T-cell (primary cell): ENCODE measurements at regions of chr2 and their contacts with region 1.

Region 1: DNA sequence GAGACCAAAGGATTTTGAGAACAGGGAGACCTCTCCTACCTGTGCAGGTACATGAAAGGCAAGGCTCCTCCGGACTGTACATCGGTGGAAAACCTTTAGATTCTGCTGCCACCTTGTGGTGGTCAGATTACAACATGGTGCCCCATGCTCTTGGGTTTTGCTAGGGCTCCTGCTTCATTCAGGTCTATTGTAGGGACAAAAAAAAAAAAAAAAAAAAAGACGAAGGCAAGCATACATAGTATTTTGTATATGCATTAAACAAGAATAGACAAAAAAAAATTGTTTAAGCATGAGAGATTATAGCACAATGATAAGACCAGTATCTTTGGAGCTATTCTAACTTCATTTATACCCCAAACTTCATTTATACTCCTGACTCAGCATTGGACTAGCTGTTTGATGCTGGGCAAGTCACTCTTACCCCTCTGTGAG is 27.4 kb upstream of the SPR start:
- DNase-seq: peak in 34 of 35 experiments; percentile 12 to 78 (median 42)
- ATAC-seq: peak; percentile 67 to 76 (median 73)
- H3K4me3 ChIP-seq: no peak overlapping the region
- H3K4me3 Mint-ChIP-seq: no peak overlapping the region
- H3K27ac ChIP-seq: no peak overlapping the region
- H3K27ac Mint-ChIP-seq: peak overlapping the region in 1 of 2 donors; percentile 36
- H3K4me1 ChIP-seq: peaks cover 0 to 8% of the 10 kb centered on the region in 2 experiments
- H3K4me1 Mint-ChIP-seq: peaks cover 7 to 14% (median 8%) of the 10 kb centered on the region in 3 donors
- H3K27me3 ChIP-seq: peaks cover 4 to 26% of the 10 kb centered on the region in 2 experiments
- H3K27me3 Mint-ChIP-seq: peaks cover 50 to 58% of the 10 kb centered on the region in 2 donors

Region 2: DNA sequence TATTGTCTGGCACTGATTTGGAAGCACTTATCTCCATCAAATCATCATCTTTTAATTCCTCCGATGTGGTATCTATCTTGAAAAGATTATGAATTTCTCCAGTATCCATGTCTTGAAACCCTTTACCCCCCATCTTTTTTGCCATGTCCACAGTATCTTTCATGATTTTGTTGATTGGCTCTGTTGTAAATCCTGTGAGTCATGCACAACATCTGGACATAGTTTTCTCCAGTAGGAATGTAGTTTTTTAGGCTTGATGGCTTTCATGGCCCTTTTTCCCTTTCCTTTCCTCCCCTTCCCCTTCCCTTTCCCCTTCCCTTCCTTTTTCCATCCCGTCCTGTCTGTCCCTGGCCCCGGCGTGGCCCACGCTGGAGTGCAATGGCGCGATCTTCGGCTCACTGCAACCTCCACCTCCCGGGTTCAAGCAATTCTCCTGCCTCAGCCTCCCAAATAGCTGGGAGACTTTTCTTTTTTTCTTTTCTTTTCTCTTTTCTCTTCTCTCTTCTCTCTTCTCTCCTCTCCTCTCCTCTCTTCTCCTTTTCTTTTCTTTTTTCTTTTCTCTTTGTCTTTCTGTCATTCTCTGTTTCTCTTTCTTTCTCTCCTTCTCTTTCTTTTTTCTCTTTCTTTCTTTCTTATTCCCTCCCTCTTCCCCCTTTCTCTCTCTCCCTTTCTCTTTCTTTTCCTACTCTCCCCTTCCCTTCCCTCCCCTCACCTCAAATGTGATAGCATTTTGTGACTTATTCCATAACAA is 1546.7 kb before region 1 on chr2:
- CTCF ChIA-PET with region 1: no interaction called
- POLR2A ChIA-PET with region 1: no interaction called
- DNase-seq: no peak
- ATAC-seq: no peak
- H3K4me3 ChIP-seq: no peak overlapping the region
- H3K4me3 Mint-ChIP-seq: no peak overlapping the region
- H3K27ac ChIP-seq: no peak overlapping the region
- H3K27ac Mint-ChIP-seq: no peak overlapping the region
- H3K4me1 ChIP-seq: no peaks in the 10 kb centered on the region
- H3K4me1 Mint-ChIP-seq: no peaks in the 10 kb centered on the region
- H3K27me3 ChIP-seq: peaks cover 0 to 3% of the 10 kb centered on the region in 2 experiments
- H3K27me3 Mint-ChIP-seq: peaks cover 0 to 1% of the 10 kb centered on the region in 2 donors

Region 3: GRCh38 chr2:72669121-72669520 is 190.7 kb before region 1 on chr2:
- CTCF ChIA-PET with region 1: no interaction called
- POLR2A ChIA-PET with region 1: no interaction called
- DNase-seq: no peak
- ATAC-seq: no peak
- H3K4me3 ChIP-seq: no peak overlapping the region
- H3K4me3 Mint-ChIP-seq: no peak overlapping the region
- H3K27ac ChIP-seq: no peak overlapping the region
- H3K27ac Mint-ChIP-seq: no peak overlapping the region
- H3K4me1 ChIP-seq: no peaks in the 10 kb centered on the region
- H3K4me1 Mint-ChIP-seq: peaks cover 0 to 1% (median 0%) of the 10 kb centered on the region in 3 donors
- H3K27me3 ChIP-seq: no peaks in the 10 kb centered on the region
- H3K27me3 Mint-ChIP-seq: no peaks in the 10 kb centered on the region

Region 4: DNA sequence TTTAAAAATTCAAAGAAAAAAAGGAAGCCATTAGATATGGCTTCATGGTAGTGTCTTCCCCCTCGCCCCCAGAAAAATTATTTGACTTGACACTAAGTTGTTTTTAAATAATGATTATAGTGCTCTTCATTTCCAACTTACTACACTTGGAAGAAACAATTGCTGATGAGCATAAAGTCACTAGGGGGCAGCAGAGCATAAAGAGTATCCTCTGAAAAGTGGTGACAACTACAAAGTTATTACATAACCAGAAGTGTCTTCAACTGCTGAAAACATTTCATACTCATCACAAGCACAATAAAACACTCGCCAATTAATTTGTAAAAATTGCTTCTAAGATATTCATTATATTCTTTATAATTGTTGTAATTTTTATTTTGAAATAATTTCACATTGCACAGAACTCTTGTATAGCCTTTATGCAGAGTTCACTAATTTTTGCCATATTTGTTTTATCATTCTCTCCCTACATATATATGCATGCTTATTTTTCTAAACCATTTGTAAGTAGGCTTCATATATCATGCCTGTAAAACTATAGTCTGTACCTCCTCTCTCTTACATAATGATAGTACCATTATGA is 88.9 kb before region 1 on chr2:
- CTCF ChIA-PET with region 1: interaction called, 9 to 12 read pairs
- POLR2A ChIA-PET with region 1: no interaction called
- DNase-seq: peak in 31 of 35 experiments; percentile 2 to 84 (median 43)
- ATAC-seq: peak in 3 of 4 experiments; percentile 45 to 56 (median 54)
- H3K4me3 ChIP-seq: no peak overlapping the region
- H3K4me3 Mint-ChIP-seq: no peak overlapping the region
- H3K27ac ChIP-seq: no peak overlapping the region
- H3K27ac Mint-ChIP-seq: no peak overlapping the region
- H3K4me1 ChIP-seq: no peaks in the 10 kb centered on the region
- H3K4me1 Mint-ChIP-seq: peaks cover 0 to 5% (median 0%) of the 10 kb centered on the region in 3 donors
- H3K27me3 ChIP-seq: no peaks in the 10 kb centered on the region
- H3K27me3 Mint-ChIP-seq: no peaks in the 10 kb centered on the region